ENCODE measurements at regions of chr5 and their contacts with region 1.

Region 1: GRCh38 chr5:111337688-111338087 is 113.5 kb downstream of the CAMK4 start:
- DNase-seq: no peak
- H3K4me3 Mint-ChIP-seq: no peak overlapping the region
- H3K27ac Mint-ChIP-seq: peak overlapping the region; percentile 61
- H3K4me1 Mint-ChIP-seq: peaks cover 11% of the 10 kb centered on the region
- H3K27me3 Mint-ChIP-seq: no peaks in the 10 kb centered on the region

Region 2: GRCh38 chr5:111229871-111230810 is 107.5 kb before region 1 on chr5:
- intact Hi-C with region 1: loop called (anchors 2 kb)
- DNase-seq: no peak
- H3K4me3 Mint-ChIP-seq: peak overlapping the region; percentile 79
- H3K27ac Mint-ChIP-seq: peak overlapping the region; percentile 96
- H3K4me1 Mint-ChIP-seq: peaks cover 97% of the 10 kb centered on the region
- H3K27me3 Mint-ChIP-seq: no peaks in the 10 kb centered on the region

Region 3: GRCh38 chr5:111313017-111313724 is 24.5 kb before region 1 on chr5:
- intact Hi-C with region 1: loop called (anchors 1 kb)
- DNase-seq: no peak
- H3K4me3 Mint-ChIP-seq: no peak overlapping the region
- H3K27ac Mint-ChIP-seq: peak overlapping the region; percentile 64
- H3K4me1 Mint-ChIP-seq: peaks cover 22% of the 10 kb centered on the region
- H3K27me3 Mint-ChIP-seq: no peaks in the 10 kb centered on the region

Region 4: DNA sequence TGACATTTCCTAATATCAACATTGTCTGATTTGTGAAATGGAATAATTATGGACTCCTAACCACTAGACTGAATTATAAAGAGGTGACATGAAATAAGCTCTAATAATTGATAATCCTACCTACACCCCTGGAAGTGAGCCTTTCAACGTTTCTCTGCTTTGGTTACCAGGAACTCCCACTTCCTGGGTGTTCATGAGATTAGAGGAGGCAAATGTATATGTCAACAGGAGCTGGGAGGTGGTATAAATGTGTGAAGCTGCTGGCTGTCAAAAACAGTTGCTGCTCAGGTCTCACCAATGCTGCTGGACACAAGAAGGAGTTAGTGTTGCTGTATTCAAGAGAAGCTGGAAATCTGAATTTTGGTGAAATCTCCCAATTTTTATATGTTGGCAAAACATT is 16.7 kb before region 1 on chr5:
- intact Hi-C with region 1: loop called (anchors 2 kb)
- DNase-seq: no peak
- H3K4me3 Mint-ChIP-seq: no peak overlapping the region
- H3K27ac Mint-ChIP-seq: no peak overlapping the region
- H3K4me1 Mint-ChIP-seq: peaks cover 41% of the 10 kb centered on the region
- H3K27me3 Mint-ChIP-seq: no peaks in the 10 kb centered on the region

Region 5: DNA sequence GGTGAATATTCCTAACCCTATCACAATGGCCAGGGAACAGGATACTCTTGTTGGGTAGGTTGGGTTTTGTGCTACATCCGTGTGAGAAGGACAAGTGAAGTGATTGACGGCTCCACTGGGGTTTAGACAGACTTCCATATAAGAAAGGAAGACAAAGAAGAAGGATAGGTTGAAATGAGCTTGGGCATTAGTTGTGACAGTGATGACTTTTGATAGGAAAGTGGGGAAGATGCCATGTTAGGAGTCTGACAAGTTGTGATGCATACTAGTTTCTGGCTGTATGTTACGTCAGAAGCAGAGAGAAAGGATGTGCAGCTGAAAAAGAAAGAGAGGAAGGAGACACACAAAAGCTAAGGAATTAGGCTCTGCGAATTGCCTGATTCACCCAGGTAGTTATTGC is 36.7 kb after region 1 on chr5:
- intact Hi-C with region 1: no loop called
- DNase-seq: no peak
- H3K4me3 Mint-ChIP-seq: no peak overlapping the region
- H3K27ac Mint-ChIP-seq: no peak overlapping the region
- H3K4me1 Mint-ChIP-seq: no peaks in the 10 kb centered on the region
- H3K27me3 Mint-ChIP-seq: no peaks in the 10 kb centered on the region

Region 6: DNA sequence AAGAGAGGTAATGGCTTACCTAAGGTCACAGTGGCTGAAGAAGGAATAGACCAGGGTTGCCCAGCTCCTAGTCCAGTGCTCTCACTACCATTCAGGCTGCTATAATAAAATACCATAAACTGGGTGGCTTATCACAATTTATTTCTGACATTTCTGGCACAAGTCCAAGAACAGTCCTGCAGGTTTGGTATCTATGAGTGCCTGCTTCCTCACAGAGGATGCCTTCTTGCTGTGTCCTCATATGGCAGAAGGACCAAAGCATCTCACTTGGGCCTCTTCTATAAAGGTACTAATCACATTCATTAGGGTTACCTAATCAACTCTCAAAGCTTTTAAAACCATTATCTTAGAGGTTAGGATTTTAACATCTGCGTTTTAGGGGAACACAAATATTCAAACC is 157.5 kb after region 1 on chr5:
- intact Hi-C with region 1: loop called (anchors 5 kb)
- DNase-seq: no peak
- H3K4me3 Mint-ChIP-seq: no peak overlapping the region
- H3K27ac Mint-ChIP-seq: no peak overlapping the region
- H3K4me1 Mint-ChIP-seq: peaks cover 43% of the 10 kb centered on the region
- H3K27me3 Mint-ChIP-seq: no peaks in the 10 kb centered on the region

Measured in activated T-helper 1 cell treated with anti-CD3 and anti-CD28 coated beads, Interleukin-12 subunit alpha, Interleukin-12 subunit beta, Interleukin-2, Interleukin-4 antibody, amounts not matched to agents 30 ng/mL and 10 ng/mL and 1 ng/mL, durations not matched to agents 14 hours and 24 hours and 36 hours (primary cell).